ENCODE measurements at regions of chr13 and their contacts with region 1.

Region 1: GRCh38 chr13:78604782-78605611 is 1.6 kb upstream of the POU4F1 start:
- DNase-seq: no peak
- ATAC-seq: no peak
- H3K4me3 ChIP-seq: no peak overlapping the region
- H3K4me3 Mint-ChIP-seq: no peak overlapping the region
- H3K27ac ChIP-seq: no peak overlapping the region
- H3K27ac Mint-ChIP-seq: no peak overlapping the region
- H3K4me1 ChIP-seq: peaks cover 22 to 65% of the 10 kb centered on the region in 2 experiments
- H3K4me1 Mint-ChIP-seq: peaks cover 50 to 68% (median 54%) of the 10 kb centered on the region in 3 donors
- H3K27me3 ChIP-seq: peaks cover 47 to 90% of the 10 kb centered on the region in 2 experiments
- H3K27me3 Mint-ChIP-seq: peaks cover 78 to 88% of the 10 kb centered on the region in 2 donors

Region 2: DNA sequence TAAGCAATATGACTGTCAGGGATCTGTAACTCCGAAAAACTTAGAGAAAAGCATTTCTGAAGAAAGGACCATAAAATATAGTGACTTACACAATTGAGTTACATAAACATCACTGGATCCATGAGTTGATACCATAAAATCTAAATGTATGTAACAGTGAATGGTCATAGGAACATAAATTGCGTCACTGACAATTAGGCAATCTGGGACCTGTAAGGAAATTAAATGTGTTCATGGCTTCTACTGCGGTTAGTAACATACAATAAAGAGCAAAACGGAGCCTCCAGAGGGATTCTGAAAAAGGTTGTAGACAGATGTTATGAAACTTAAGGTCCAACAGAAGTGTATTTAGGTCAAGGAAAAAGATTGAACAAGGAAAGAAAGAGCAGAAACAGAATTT is 28.7 kb before region 1 on chr13:
- CTCF ChIA-PET with region 1: interaction called in 1 of 2 experiments, 13 read pairs
- POLR2A ChIA-PET with region 1: no interaction called
- DNase-seq: no peak
- ATAC-seq: no peak
- H3K4me3 ChIP-seq: no peak overlapping the region
- H3K4me3 Mint-ChIP-seq: no peak overlapping the region
- H3K27ac ChIP-seq: no peak overlapping the region
- H3K27ac Mint-ChIP-seq: no peak overlapping the region
- H3K4me1 ChIP-seq: no peaks in the 10 kb centered on the region
- H3K4me1 Mint-ChIP-seq: no peaks in the 10 kb centered on the region
- H3K27me3 ChIP-seq: peaks cover 0 to 6% of the 10 kb centered on the region in 2 experiments
- H3K27me3 Mint-ChIP-seq: peaks cover 31 to 43% of the 10 kb centered on the region in 2 donors

Measured in T-cell (primary cell).